CD8-positive, alpha-beta memory T cell (primary cell): ENCODE measurements at regions of chr2 and their contacts with region 1.

Region 1: GRCh38 chr2:61144697-61145268 is 17.2 kb upstream of the C2orf74 start:
- DNase-seq: peak; percentile 87 to 95 (median 91)
- H3K4me3 ChIP-seq: peak overlapping the region; percentile 80
- H3K4me3 Mint-ChIP-seq: peak overlapping the region; percentile 88 to 98 (median 94)
- H3K27ac ChIP-seq: peak overlapping the region; percentile 32
- H3K27ac Mint-ChIP-seq: peak overlapping the region; percentile 84 to 98 (median 96)
- H3K4me1 ChIP-seq: peaks cover 9% of the 10 kb centered on the region
- H3K4me1 Mint-ChIP-seq: peaks cover 10 to 15% (median 15%) of the 10 kb centered on the region in 3 donors
- H3K27me3 ChIP-seq: no peaks in the 10 kb centered on the region
- H3K27me3 Mint-ChIP-seq: peaks cover 0 to 3% of the 10 kb centered on the region in 2 donors

Region 2: DNA sequence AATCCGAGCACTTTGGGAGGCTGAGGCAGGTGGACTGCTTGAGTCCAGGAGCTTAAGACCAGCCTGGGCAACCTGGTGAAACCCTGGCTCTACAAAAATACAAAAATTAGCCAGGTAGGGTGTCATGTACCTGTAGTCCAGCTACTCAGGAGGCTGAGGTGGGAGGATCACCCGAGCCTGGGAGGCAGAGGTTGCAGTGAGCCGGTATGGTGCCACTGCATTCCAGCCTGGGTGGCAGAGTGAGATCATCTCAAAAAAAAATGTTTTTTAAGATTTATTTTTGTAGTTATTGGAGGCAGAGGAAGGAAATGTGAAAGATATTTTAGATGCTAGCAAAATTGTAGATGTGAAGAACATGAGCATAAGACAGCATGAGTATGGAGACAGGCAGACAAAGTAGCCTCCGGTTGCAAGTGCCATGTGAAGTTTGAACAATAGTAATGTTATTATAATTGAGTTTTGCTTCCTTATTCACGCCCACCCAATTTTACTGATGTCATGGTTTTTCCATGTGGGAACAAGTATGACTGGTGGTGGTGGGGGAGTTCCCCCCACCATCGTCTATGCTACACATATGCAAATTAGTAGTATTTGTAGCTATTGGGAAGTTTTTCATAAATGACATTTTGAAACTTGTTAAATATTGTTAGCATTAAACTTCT is 245.4 kb before region 1 on chr2:
- CTCF ChIA-PET with region 1: no interaction called
- POLR2A ChIA-PET with region 1: interaction called, 12 read pairs
- DNase-seq: no peak
- H3K4me3 ChIP-seq: no peak overlapping the region
- H3K4me3 Mint-ChIP-seq: peak overlapping the region in 2 of 7 donors; percentile 15 to 77
- H3K27ac ChIP-seq: no peak overlapping the region
- H3K27ac Mint-ChIP-seq: peak overlapping the region; percentile 4 to 93 (median 49)
- H3K4me1 ChIP-seq: no peaks in the 10 kb centered on the region
- H3K4me1 Mint-ChIP-seq: peaks cover 18 to 37% (median 28%) of the 10 kb centered on the region in 3 donors
- H3K27me3 ChIP-seq: no peaks in the 10 kb centered on the region
- H3K27me3 Mint-ChIP-seq: no peaks in the 10 kb centered on the region

Region 3: GRCh38 chr2:61176755-61177726 is 32.3 kb after region 1 on chr2:
- CTCF ChIA-PET with region 1: interaction called, 11 read pairs
- POLR2A ChIA-PET with region 1: interaction called, 48 read pairs
- DNase-seq: peak; percentile 91 to 95 (median 93)
- H3K4me3 ChIP-seq: peak overlapping the region; percentile 93
- H3K4me3 Mint-ChIP-seq: peak overlapping the region; percentile 90 to 98 (median 94)
- H3K27ac ChIP-seq: peak overlapping the region; percentile 95
- H3K27ac Mint-ChIP-seq: peak overlapping the region; percentile 94 to 99 (median 96)
- H3K4me1 ChIP-seq: peaks cover 48% of the 10 kb centered on the region
- H3K4me1 Mint-ChIP-seq: peaks cover 52 to 57% (median 53%) of the 10 kb centered on the region in 3 donors
- H3K27me3 ChIP-seq: no peaks in the 10 kb centered on the region
- H3K27me3 Mint-ChIP-seq: no peaks in the 10 kb centered on the region

Region 4: GRCh38 chr2:61220768-61221167 is 76.0 kb after region 1 on chr2:
- CTCF ChIA-PET with region 1: no interaction called
- POLR2A ChIA-PET with region 1: no interaction called
- DNase-seq: no peak
- H3K4me3 ChIP-seq: no peak overlapping the region
- H3K4me3 Mint-ChIP-seq: no peak overlapping the region
- H3K27ac ChIP-seq: no peak overlapping the region
- H3K27ac Mint-ChIP-seq: no peak overlapping the region
- H3K4me1 ChIP-seq: no peaks in the 10 kb centered on the region
- H3K4me1 Mint-ChIP-seq: no peaks in the 10 kb centered on the region
- H3K27me3 ChIP-seq: no peaks in the 10 kb centered on the region
- H3K27me3 Mint-ChIP-seq: no peaks in the 10 kb centered on the region